ENCODE measurements at regions of chr1 and their contacts with region 1.

Region 1: GRCh38 chr1:164423136-164423535 is 135.8 kb upstream of the PBX1 start:
- DNase-seq: no peak
- H3K4me3 ChIP-seq: no peak overlapping the region
- CTCF ChIP-seq: no peak

Region 2: DNA sequence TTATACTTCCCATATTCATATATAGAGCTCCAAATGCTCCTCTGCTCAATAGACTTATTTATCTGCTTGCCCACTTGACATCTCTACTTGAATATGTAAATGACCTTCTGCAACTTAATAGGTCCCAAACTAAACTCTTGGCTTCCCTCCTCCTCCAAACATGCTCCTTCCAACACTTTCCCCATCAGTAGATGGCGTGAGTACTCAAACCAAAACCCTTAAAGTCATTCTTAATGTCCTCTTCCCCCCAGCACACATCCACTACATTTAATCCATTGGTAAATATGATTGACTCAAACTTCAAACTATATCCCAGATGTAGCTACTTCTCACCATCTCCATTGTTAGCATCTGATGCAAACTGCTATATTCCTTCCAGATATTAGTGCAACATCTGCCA is 87.3 kb after region 1 on chr1:
- in situ Hi-C with region 1: loop called (anchors 25 kb)
- DNase-seq: no peak
- H3K4me3 ChIP-seq: no peak overlapping the region
- CTCF ChIP-seq: no peak